HEK293 (cell line): ENCODE measurements at regions of chr11 and their contacts with region 1.

Region 1: GRCh38 chr11:65204646-65205601 is 23.2 kb downstream of the CAPN1 start:
- H3K4me3 ChIP-seq: no peak overlapping the region
- H3K27ac ChIP-seq: no peak overlapping the region
- H3K4me1 ChIP-seq: no peaks in the 10 kb centered on the region
- CTCF ChIP-seq: peak; percentile 81

Region 2: DNA sequence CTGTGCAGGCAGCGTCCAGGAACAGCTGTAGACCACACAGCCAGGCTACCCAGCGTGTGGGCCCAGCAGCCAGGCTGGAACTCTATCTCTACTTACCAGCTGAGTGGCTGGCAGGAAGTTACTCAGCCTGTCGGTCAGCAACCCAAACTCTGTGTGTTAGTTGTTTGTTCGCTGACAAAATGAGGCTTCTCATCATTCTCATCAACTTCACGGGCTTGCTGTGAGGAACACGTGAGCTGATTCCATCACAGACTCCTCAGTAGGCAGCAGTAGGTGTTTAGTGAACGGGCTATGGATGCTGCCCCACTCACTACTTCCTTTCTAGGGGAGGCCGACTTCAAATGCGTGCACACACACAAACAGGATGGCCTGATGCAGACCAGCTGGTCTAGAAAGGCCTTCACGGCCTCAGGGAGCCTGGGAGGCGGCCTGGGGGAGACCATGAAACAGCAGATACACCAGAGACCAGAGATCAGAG is 35.7 kb before region 1 on chr11:
- CTCF ChIA-PET with region 1: no interaction called
- POLR2A ChIA-PET with region 1: no interaction called
- H3K4me3 ChIP-seq: no peak overlapping the region
- H3K27ac ChIP-seq: no peak overlapping the region
- H3K4me1 ChIP-seq: no peaks in the 10 kb centered on the region
- CTCF ChIP-seq: no peak

Region 3: GRCh38 chr11:65194564-65194963 is 10.4 kb before region 1 on chr11:
- CTCF ChIA-PET with region 1: interaction called, 11 read pairs
- POLR2A ChIA-PET with region 1: no interaction called
- H3K4me3 ChIP-seq: no peak overlapping the region
- H3K27ac ChIP-seq: no peak overlapping the region
- H3K4me1 ChIP-seq: no peaks in the 10 kb centered on the region
- CTCF ChIP-seq: no peak

Region 4: GRCh38 chr11:65219930-65220213 is 14.9 kb after region 1 on chr11:
- CTCF ChIA-PET with region 1: interaction called, 18 read pairs
- POLR2A ChIA-PET with region 1: no interaction called
- H3K4me3 ChIP-seq: no peak overlapping the region
- H3K27ac ChIP-seq: no peak overlapping the region
- H3K4me1 ChIP-seq: no peaks in the 10 kb centered on the region; the same call in 1 of the 2 replicates
- CTCF ChIP-seq: no peak

Region 5: DNA sequence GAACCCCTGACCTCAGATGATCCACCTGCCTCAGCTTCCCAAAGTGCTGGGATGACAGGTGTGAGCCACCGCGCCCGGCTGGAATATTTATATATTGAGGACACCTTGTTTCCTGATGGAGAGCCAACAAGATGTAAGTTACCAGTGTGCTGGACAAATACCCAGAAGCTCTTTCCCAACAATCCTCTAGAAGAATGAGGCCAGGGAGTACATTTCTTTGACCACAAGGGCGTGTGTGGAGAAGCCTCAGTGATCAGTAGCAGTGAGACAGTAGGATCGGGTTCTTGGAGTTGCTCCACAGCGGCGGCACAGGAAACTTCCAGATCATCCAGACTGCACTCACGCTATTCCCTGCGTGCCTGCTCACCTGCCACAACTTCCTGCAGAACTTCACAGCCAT is 46.6 kb after region 1 on chr11:
- CTCF ChIA-PET with region 1: interaction called, 62 read pairs
- POLR2A ChIA-PET with region 1: no interaction called
- H3K4me3 ChIP-seq: no peak overlapping the region
- H3K27ac ChIP-seq: no peak overlapping the region
- H3K4me1 ChIP-seq: no peaks in the 10 kb centered on the region
- CTCF ChIP-seq: no peak

Region 6: DNA sequence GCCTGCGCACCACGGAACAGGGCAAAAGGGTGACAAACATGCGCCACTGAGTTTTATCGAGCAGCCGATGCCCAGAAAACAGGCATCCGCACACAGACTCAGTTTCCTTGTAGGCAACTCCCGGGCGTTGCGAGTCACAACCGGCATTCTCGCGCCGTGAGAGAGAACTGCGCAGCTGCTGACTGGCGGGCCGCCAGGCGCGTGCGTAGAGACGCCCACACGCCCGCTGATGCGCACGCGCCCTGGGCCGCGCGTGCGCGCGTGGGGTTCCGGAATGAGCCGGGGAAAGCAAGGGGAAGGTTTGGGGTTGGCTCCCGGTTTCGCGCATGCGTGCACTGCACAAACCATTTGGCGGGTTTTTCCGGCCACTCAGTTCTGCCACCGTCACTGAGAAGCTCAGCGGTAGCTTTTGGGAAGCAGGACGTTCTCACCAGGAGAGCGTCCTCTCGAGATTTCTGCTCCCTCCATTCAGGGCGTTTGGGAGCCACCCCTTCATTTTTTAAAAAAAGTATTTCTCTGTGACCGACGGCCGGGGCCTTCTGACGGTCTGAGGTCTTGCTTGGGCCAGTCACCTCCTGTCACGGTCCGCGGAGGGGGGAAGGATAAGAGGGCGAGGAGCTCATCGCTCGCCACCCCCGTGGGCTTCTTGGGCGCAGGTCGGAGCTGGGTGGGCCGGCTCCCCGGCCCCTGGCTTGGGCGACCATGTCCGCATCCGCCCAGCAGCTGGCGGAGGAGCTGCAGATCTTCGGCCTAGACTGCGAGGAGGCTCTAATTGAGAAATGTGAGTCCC is 56.9 kb after region 1 on chr11 and contains the start of gene POLA2:
- CTCF ChIA-PET with region 1: interaction called, 11 read pairs
- POLR2A ChIA-PET with region 1: interaction called, 4 read pairs
- H3K4me3 ChIP-seq: peak within 1 kb of the TSS; percentile 79
- H3K27ac ChIP-seq: peak within 1 kb of the TSS; percentile 70
- H3K4me1 ChIP-seq: no peaks in the 10 kb centered on the region
- CTCF ChIP-seq: no peak

Region 7: GRCh38 chr11:65314501-65315203 is 109.7 kb after region 1 on chr11 and contains the start of gene CDC42EP2:
- CTCF ChIA-PET with region 1: interaction called, 16 read pairs
- POLR2A ChIA-PET with region 1: no interaction called
- H3K4me3 ChIP-seq: peak within 1 kb of the TSS; percentile 67
- H3K27ac ChIP-seq: peak within 1 kb of the TSS; percentile 60; the same call in 1 of the 2 replicates
- H3K4me1 ChIP-seq: no peaks in the 10 kb centered on the region
- CTCF ChIP-seq: peak; percentile 38

Region 8: DNA sequence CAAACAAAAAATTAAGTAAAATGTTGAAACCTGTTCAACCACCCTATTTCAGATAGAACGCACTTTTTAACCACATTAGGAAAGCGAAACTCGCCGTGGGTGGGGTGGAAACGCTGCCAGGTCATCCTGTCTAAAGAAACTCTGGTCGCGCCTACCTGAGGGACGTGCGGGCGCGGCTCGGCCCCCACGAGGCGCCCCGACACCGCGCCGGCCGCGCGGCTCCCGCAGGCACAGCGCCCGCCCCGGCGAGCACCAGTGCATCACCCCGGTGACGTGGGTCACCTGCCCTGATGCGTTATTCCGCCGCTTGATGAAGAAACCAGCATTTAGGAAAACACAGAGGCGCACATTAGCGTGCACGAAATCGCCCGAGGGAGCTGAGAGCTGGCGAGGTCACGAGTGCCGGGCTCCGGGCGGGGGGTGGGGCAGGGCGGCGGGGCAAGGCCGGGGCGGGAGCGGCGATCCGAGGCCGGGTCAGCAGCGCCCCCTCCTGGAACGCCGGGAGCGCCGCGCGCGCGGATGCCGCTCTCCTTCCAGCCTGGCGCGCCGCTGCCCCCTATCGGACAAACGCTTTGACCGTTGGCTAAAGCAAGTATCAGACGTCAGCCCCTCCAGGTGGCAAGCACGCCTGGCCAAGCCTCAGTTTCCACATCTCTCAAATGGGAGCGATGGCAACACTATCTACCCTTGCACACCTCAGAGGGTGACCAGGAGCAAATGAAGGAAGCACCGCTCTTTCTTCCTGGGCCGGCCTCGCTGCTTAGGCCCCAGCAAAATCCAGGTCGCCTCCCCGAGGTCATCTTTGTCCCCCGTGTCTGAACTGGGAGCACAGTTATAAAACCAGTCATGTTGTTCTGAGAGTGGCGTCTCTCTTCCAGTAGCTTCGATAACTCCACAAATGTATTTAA is 613.2 kb after region 1 on chr11:
- CTCF ChIA-PET with region 1: no interaction called
- POLR2A ChIA-PET with region 1: no interaction called
- H3K4me3 ChIP-seq: peak overlapping the region; percentile 66
- H3K27ac ChIP-seq: peak overlapping the region; percentile 45; the same call in 1 of the 2 replicates
- H3K4me1 ChIP-seq: no peaks in the 10 kb centered on the region; the same call in 1 of the 2 replicates
- CTCF ChIP-seq: peak; percentile 92